ENCODE measurements at regions of chr7 and their contacts with region 1.

Region 1: GRCh38 chr7:107995184-107996071 is 7.5 kb downstream of the LAMB1 start:
- DNase-seq: peak; percentile 90
- H3K4me3 Mint-ChIP-seq: peak overlapping the region; percentile 61
- H3K27ac Mint-ChIP-seq: peak overlapping the region; percentile 93
- H3K4me1 Mint-ChIP-seq: peaks cover 37% of the 10 kb centered on the region
- H3K27me3 Mint-ChIP-seq: no peaks in the 10 kb centered on the region
- CTCF ChIP-seq: no peak

Region 2: DNA sequence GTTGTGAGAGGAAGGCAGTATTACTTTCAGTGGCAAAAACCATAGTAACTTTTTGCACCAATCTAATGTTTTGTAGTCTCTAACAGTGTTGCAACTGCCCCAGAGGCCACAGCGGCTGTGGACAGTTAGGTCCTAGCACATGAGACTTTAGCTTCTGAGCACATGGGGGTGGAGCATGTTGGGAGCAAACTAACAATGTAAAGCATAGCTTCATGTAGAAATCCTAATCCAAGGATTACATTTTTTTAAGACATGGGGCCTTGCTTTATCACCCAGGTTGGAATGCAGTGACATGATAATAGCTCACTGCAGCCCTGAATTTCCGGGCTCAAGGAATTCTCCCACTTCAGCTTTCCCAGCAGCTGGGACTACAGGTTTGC is 41.5 kb before region 1 on chr7:
- CTCF ChIA-PET with region 1: no interaction called
- POLR2A ChIA-PET with region 1: interaction called, 40 read pairs
- intact Hi-C with region 1: loop called (anchors 5 kb)
- DNase-seq: no peak
- H3K4me3 Mint-ChIP-seq: no peak overlapping the region
- H3K27ac Mint-ChIP-seq: peak overlapping the region; percentile 35
- H3K4me1 Mint-ChIP-seq: peaks cover 32% of the 10 kb centered on the region
- H3K27me3 Mint-ChIP-seq: no peaks in the 10 kb centered on the region
- CTCF ChIP-seq: no peak

Region 3: GRCh38 chr7:107958764-107959526 is 36.5 kb before region 1 on chr7:
- CTCF ChIA-PET with region 1: interaction called, 4 read pairs
- POLR2A ChIA-PET with region 1: interaction called, 40 read pairs
- intact Hi-C with region 1: no loop called
- DNase-seq: peak; percentile 92
- H3K4me3 Mint-ChIP-seq: no peak overlapping the region
- H3K27ac Mint-ChIP-seq: peak overlapping the region; percentile 91
- H3K4me1 Mint-ChIP-seq: peaks cover 27% of the 10 kb centered on the region
- H3K27me3 Mint-ChIP-seq: no peaks in the 10 kb centered on the region
- CTCF ChIP-seq: no peak

Region 4: GRCh38 chr7:107972075-107972482 is 23.3 kb before region 1 on chr7:
- CTCF ChIA-PET with region 1: no interaction called
- POLR2A ChIA-PET with region 1: interaction called, 117 read pairs
- intact Hi-C with region 1: no loop called
- DNase-seq: peak; percentile 91
- H3K4me3 Mint-ChIP-seq: peak overlapping the region; percentile 36
- H3K27ac Mint-ChIP-seq: peak overlapping the region; percentile 88
- H3K4me1 Mint-ChIP-seq: peaks cover 36% of the 10 kb centered on the region
- H3K27me3 Mint-ChIP-seq: no peaks in the 10 kb centered on the region
- CTCF ChIP-seq: no peak

Region 5: GRCh38 chr7:107982918-107983389 is 12.5 kb before region 1 on chr7:
- CTCF ChIA-PET with region 1: interaction called, 4 read pairs
- POLR2A ChIA-PET with region 1: interaction called, 37 read pairs
- intact Hi-C with region 1: no loop called
- DNase-seq: no peak
- H3K4me3 Mint-ChIP-seq: no peak overlapping the region
- H3K27ac Mint-ChIP-seq: no peak overlapping the region
- H3K4me1 Mint-ChIP-seq: peaks cover 11% of the 10 kb centered on the region
- H3K27me3 Mint-ChIP-seq: no peaks in the 10 kb centered on the region
- CTCF ChIP-seq: no peak

Region 6: GRCh38 chr7:108103558-108104298 is 108.3 kb after region 1 on chr7:
- CTCF ChIA-PET with region 1: no interaction called
- POLR2A ChIA-PET with region 1: no interaction called
- intact Hi-C with region 1: no loop called
- DNase-seq: no peak
- H3K4me3 Mint-ChIP-seq: no peak overlapping the region
- H3K27ac Mint-ChIP-seq: no peak overlapping the region
- H3K4me1 Mint-ChIP-seq: no peaks in the 10 kb centered on the region
- H3K27me3 Mint-ChIP-seq: peaks cover 10% of the 10 kb centered on the region
- CTCF ChIP-seq: no peak

Region 7: GRCh38 chr7:108294595-108294994 is 299.2 kb after region 1 on chr7:
- CTCF ChIA-PET with region 1: no interaction called
- POLR2A ChIA-PET with region 1: no interaction called
- intact Hi-C with region 1: no loop called
- DNase-seq: no peak
- H3K4me3 Mint-ChIP-seq: no peak overlapping the region
- H3K27ac Mint-ChIP-seq: no peak overlapping the region
- H3K4me1 Mint-ChIP-seq: peaks cover 8% of the 10 kb centered on the region
- H3K27me3 Mint-ChIP-seq: no peaks in the 10 kb centered on the region
- CTCF ChIP-seq: no peak